AG04450 (cell line): ENCODE measurements at regions of chr11 and their contacts with region 1.

Region 1: GRCh38 chr11:111688028-111688427 is 78.2 kb downstream of the PPP2R1B start:
- DNase-seq: no peak
- H3K4me3 ChIP-seq: no peak overlapping the region
- H3K27ac ChIP-seq: no peak overlapping the region
- H3K27me3 ChIP-seq: no peaks in the 10 kb centered on the region
- CTCF ChIP-seq: no peak

Region 2: DNA sequence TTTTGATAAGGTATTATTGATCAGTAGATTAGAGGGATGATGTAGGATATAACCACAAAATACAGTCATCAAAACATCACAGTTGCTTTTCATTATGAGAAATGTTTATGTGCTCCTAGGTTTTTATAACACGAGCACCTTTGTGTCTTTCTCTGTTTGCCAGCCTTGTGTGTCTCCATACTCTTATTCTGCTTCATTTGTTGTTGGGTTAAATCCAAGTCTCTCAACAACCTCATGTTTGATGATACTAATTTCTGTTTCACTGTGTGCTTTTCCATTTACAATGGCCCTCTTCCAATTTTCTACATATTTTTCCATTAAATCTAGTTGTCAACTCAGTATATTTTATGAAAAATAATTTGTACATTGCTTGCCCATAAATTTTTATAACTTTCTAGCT is 550.2 kb before region 1 on chr11:
- CTCF ChIA-PET with region 1: no interaction called
- POLR2A ChIA-PET with region 1: no interaction called
- DNase-seq: no peak
- H3K4me3 ChIP-seq: no peak overlapping the region
- H3K27ac ChIP-seq: no peak overlapping the region
- H3K27me3 ChIP-seq: no peaks in the 10 kb centered on the region
- CTCF ChIP-seq: no peak

Region 3: GRCh38 chr11:111635706-111636045 is 52.4 kb before region 1 on chr11:
- CTCF ChIA-PET with region 1: no interaction called
- POLR2A ChIA-PET with region 1: interaction called, 10 read pairs
- DNase-seq: peak; percentile 29
- H3K4me3 ChIP-seq: no peak overlapping the region; the same call in 1 of the 2 replicates
- H3K27ac ChIP-seq: peak overlapping the region; percentile 53
- H3K27me3 ChIP-seq: no peaks in the 10 kb centered on the region
- CTCF ChIP-seq: no peak

Region 4: DNA sequence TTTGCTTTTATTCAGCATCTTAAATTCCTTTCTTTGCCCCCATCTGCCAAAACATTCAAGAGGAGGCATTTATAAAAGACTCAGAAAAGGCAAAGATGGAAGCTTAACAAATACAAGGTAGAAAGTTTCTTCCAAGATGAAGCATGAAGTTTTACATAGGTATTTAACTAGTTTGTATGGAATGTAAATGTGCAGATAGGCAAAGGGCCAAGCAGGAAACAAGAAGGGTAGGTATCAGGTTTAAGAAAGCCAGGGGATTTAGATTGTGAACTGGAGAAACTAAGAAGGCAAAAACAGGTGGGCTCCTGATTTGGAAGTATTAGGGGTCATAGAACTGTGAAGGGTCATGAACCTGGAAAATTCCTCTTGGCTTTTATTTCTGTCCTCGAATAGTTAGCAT is 15.5 kb after region 1 on chr11:
- CTCF ChIA-PET with region 1: no interaction called
- POLR2A ChIA-PET with region 1: no interaction called
- DNase-seq: no peak
- H3K4me3 ChIP-seq: no peak overlapping the region
- H3K27ac ChIP-seq: no peak overlapping the region
- H3K27me3 ChIP-seq: no peaks in the 10 kb centered on the region
- CTCF ChIP-seq: no peak